ENCODE measurements at regions of chr3 and their contacts with region 1.

Region 1: DNA sequence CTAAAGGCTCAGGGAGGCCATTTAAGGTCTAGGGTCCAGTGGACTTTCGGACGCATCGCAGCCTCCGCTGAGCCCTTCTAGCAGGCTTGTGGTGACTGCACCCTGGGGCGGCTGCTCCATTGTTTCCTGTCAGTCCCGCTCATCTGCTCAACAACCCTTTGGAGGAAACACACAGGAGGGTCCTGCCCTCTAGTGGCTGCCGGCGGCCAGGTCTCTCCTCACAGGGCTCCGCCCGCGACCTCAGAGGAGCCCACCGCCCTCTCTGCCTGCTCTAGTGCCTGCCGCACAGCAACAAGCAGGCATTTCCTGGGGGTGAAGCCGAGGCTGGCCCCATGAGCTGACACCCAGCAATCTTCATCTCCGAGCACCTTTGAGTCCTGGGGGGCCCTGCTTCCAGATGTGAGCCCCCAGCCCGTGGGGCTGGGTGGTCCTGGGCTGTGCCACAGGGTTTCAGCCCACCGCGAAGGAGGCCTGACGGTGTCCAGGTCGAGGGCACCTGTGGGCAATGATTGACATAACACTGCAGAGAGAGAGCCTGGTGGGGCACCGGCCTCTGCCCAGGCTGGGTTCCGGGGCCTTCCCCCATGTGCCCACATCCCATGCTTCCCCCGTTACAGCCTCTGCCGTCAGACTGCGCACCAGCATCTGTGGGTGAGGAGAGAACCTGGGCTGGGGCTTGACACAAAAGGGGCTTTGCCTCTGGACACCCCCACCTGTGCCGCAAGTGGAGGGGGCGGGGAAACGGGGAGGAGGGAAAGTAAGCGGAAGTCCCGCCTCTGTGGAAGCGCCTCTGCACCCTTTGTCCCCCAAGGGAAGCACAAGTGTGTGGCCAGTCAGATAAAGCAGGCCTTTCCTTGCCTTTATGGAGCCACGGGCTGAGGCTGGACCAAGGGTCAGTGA is 27.0 kb upstream of the SFMBT1 start:
- DNase-seq: peak; percentile 82 to 87
- H3K4me3 ChIP-seq: peak overlapping the region in 2 of 3 donors; percentile 36 to 39
- H3K27ac ChIP-seq: peak overlapping the region; percentile 27 to 70 (median 28)
- H3K4me1 ChIP-seq: peaks cover 7 to 11% of the 10 kb centered on the region in 2 donors
- H3K27me3 ChIP-seq: no peaks in the 10 kb centered on the region
- CTCF ChIP-seq: peak; percentile 84 to 96 (median 88)
- POLR2A ChIP-seq: no peak

Region 2: DNA sequence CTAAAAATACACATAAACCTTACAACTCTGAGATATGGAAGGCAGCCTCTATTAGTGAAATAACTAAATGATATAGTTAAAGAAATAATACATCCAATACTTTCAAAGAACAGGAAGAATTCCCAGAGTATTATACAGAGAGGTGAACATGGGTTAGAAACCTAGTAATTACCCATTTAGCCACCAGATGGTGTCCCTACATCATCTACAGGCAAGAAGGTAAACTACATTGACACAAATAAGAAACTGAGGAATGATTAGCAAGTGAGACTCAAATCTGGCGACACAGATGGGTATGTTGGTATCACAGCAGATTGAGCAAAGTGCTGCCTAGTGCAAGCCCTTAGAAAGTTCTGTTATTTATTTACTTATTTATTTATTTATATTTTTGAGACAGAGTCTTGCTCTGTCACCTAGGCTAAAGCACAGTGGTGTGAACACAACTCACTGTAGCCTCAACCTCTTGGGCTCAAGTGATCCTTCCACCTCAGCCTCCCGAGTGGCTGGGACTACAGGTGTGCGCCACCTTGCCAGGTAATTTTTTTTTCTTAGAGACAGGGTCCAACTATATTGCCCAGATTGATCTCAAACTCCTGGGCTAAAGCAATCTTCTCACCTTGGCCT is 330.4 kb before region 1 on chr3:
- intact Hi-C with region 1: loop called (anchors 10 kb)
- DNase-seq: no peak
- H3K4me3 ChIP-seq: no peak overlapping the region
- H3K27ac ChIP-seq: no peak overlapping the region
- H3K4me1 ChIP-seq: no peaks in the 10 kb centered on the region
- H3K27me3 ChIP-seq: no peaks in the 10 kb centered on the region
- CTCF ChIP-seq: peak in 4 of 6 experiments; percentile 20 to 46 (median 42)
- POLR2A ChIP-seq: no peak

Region 3: GRCh38 chr3:53180305-53181023 is 107.6 kb after region 1 on chr3:
- intact Hi-C with region 1: no loop called
- DNase-seq: no peak
- H3K4me3 ChIP-seq: no peak overlapping the region
- H3K27ac ChIP-seq: no peak overlapping the region
- H3K4me1 ChIP-seq: peaks cover 4% of the 10 kb centered on the region in 2 donors
- H3K27me3 ChIP-seq: no peaks in the 10 kb centered on the region
- CTCF ChIP-seq: no peak
- POLR2A ChIP-seq: no peak